GM12878 (cell line): ENCODE measurements at regions of chr12 and their contacts with region 1.

Region 1: DNA sequence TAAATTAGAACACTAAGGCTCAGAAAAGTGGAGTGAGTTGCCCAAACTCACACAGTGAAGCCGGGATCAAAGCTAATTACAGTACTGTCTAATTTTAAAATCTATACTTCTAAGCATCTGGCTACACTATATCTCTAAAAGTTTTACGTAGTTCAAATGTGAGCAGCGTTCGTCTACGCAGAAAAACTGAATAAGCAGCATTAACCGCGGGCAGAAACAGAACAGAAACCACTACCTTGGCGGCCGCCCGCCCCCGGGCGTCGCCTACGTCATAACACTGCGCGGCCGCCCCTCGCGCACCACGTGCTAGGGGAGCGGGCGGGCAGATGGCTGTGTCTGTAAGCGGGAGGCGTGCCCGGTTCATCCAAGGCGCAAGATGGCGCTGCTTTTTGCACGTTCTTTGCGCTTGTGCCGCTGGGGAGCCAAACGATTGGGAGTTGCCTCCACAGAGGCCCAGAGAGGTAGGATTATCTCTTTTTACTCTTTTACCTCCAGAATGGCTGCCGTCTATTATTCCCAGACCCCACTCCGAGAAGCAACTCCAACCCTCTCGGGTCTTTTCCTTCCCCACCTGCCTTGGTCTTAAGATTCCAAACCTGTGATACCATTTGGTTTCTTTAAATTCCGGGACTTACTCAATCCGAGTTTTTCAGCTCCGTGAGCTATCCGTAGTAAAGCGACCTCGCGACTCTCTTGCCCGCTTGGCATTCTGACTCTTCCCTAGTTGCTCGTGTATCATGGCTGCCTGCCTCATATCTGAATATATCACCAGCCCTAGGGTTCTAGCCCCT is at the start of gene SPRYD4:
- DNase-seq: peak; percentile 70
- ATAC-seq: peak; percentile 92
- H3K4me3 ChIP-seq: peak within 1 kb of the TSS; percentile 76
- H3K27ac ChIP-seq: peak within 1 kb of the TSS; percentile 93
- H3K4me1 ChIP-seq: peaks cover 15% of the 10 kb centered on the region
- H3K27me3 ChIP-seq: no peaks in the 10 kb centered on the region
- CTCF ChIP-seq: peak; percentile 22 to 68 (median 27); a peak in 4 of 6 replicates
- EP300 ChIP-seq: no peak
- POLR2A ChIP-seq: peak; percentile 95
- RAD21 ChIP-seq: no peak
- polyA plus RNA-seq, gene SPRYD4: 4.8 to 6.0 TPM

Region 2: GRCh38 chr12:56206457-56207166 is 261.8 kb before region 1 on chr12:
- CTCF ChIA-PET with region 1: interaction called, 52 read pairs
- POLR2A ChIA-PET with region 1: interaction called, 4 read pairs
- RAD21 ChIA-PET with region 1: interaction called, 12 read pairs
- SMC1A ChIA-PET with region 1: interaction called, 23 read pairs
- in situ Hi-C with region 1: no loop called
- intact Hi-C with region 1: loop called (anchors 1 kb)
- DNase-seq: no peak
- ATAC-seq: peak; percentile 95
- H3K4me3 ChIP-seq: no peak overlapping the region
- H3K27ac ChIP-seq: no peak overlapping the region
- H3K4me1 ChIP-seq: no peaks in the 10 kb centered on the region
- H3K27me3 ChIP-seq: no peaks in the 10 kb centered on the region
- CTCF ChIP-seq: peak; percentile 67 to 79 (median 75)
- EP300 ChIP-seq: no peak
- POLR2A ChIP-seq: no peak; the same call in 1 of the 2 replicates
- RAD21 ChIP-seq: peak; percentile 45

Region 3: GRCh38 chr12:56286044-56286830 is 182.2 kb before region 1 on chr12:
- CTCF ChIA-PET with region 1: interaction called, 10 read pairs
- POLR2A ChIA-PET with region 1: no interaction called
- RAD21 ChIA-PET with region 1: interaction called, 7 read pairs
- SMC1A ChIA-PET with region 1: interaction called, 12 read pairs
- in situ Hi-C with region 1: no loop called
- intact Hi-C with region 1: no loop called
- DNase-seq: no peak
- ATAC-seq: no peak
- H3K4me3 ChIP-seq: no peak overlapping the region
- H3K27ac ChIP-seq: no peak overlapping the region
- H3K4me1 ChIP-seq: no peaks in the 10 kb centered on the region
- H3K27me3 ChIP-seq: no peaks in the 10 kb centered on the region
- CTCF ChIP-seq: no peak
- EP300 ChIP-seq: no peak
- POLR2A ChIP-seq: no peak
- RAD21 ChIP-seq: no peak

Region 4: DNA sequence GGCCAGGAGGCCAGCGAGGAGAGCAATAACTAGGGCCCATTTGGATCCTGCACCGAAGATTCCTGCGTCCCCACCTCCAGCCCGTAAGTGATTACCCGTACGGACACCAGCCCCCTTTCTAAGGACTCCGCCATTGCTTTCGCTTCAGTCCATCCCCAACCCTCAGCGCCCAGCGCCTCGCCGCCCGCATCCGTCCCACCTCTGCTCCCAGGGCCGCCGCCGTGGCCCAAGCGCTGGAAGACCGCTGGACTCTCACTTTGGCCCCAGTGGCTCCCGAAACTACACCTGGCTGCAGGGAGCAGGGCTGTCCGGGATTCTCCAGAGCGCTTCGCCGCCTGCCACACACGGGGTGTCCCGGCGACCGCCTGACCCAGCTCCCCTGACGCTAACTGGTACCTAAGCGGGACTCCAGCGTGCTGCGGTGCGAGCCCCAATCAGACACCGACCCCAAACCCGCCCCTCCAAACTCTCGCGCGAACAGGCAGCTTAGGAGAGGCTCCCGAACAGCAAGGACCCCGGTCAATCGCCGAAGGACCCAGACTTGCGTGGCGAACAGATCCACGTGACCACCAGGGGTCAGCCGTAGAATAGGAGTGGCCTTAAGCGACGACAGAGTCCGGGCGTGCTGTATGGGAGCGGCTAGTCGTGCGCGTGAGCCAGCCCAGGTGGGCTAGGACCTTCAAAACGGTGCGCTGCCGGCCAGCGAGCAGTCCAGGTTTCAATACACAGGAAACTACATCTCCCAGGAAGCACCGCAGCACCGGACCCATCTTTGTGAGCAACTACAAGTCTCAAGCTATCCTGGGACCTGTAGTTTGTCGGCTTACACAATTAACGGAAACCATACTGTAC is 152.6 kb before region 1 on chr12 and contains the start of gene CNPY2:
- CTCF ChIA-PET with region 1: interaction called, 76 read pairs
- POLR2A ChIA-PET with region 1: interaction called, 6 read pairs
- RAD21 ChIA-PET with region 1: interaction called, 71 read pairs
- SMC1A ChIA-PET with region 1: interaction called, 21 read pairs
- in situ Hi-C with region 1: no loop called
- intact Hi-C with region 1: loop called (anchors 1 kb)
- DNase-seq: peak; percentile 97
- ATAC-seq: peak; percentile 95
- H3K4me3 ChIP-seq: peak within 1 kb of the TSS; percentile 97
- H3K27ac ChIP-seq: peak within 1 kb of the TSS; percentile 92
- H3K4me1 ChIP-seq: peaks cover 3% of the 10 kb centered on the region
- H3K27me3 ChIP-seq: no peaks in the 10 kb centered on the region
- CTCF ChIP-seq: peak in 1 of 3 experiments; percentile 50; a peak in 2 of 6 replicates
- EP300 ChIP-seq: no peak
- POLR2A ChIP-seq: peak; percentile 97
- RAD21 ChIP-seq: peak; percentile 55
- polyA plus RNA-seq, gene CNPY2: 25.0 to 50.3 TPM

Region 5: DNA sequence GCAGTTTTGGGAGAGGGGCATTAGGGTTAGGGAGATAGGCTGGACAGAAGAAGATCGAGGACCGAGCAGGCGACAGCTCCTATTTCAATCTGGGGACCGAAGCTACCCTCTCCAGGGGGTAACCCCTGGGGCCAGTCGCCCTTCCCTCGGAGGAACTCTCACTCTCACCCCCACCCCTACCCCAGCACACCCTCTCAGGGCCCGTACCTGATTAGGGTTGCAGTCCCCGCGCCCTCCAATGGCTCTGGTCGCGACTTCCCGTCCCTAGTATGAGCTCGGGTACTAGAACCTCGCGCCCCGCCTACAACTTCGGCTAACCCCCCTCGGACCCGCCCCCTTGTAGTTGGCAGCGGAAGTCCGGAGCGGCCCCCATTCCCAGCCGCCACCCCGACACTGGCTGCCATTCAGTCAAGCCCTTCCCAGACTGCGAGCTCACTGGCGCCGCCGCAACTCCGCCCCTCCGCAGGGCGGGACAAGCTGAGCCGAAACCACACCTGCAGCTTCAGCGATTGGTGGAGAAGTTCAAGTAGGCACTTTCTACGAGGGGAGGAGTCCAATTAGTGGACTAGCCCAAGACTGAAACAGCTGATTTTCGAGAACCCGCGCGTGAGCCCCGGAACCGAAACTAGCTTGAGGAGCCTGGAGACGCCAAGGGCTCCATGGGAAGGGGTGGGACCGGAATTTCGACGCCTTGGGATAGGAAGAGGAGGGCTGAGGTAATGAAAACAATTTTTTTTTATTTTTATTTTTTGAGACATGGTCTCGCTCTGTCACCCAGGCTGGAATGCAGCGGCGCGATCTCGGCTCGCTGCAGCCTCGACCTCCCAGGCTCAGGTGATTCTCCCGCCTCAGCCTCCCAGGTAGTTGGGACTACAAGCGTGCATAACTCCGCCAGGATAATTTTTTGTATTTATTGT is 108.3 kb before region 1 on chr12 and contains the start of gene STAT2:
- CTCF ChIA-PET with region 1: interaction called, 31 read pairs
- POLR2A ChIA-PET with region 1: interaction called, 6 read pairs
- RAD21 ChIA-PET with region 1: interaction called, 41 read pairs
- SMC1A ChIA-PET with region 1: interaction called, 42 read pairs
- in situ Hi-C with region 1: no loop called
- intact Hi-C with region 1: no loop called
- DNase-seq: peak; percentile 99
- ATAC-seq: peak; percentile 98
- H3K4me3 ChIP-seq: peak within 1 kb of the TSS; percentile 93
- H3K27ac ChIP-seq: peak within 1 kb of the TSS; percentile 89
- H3K4me1 ChIP-seq: peaks cover 5% of the 10 kb centered on the region; the same call in 1 of the 2 replicates
- H3K27me3 ChIP-seq: no peaks in the 10 kb centered on the region
- CTCF ChIP-seq: no peak
- EP300 ChIP-seq: no peak
- POLR2A ChIP-seq: peak; percentile 90
- RAD21 ChIP-seq: no peak
- polyA plus RNA-seq, gene STAT2: 16.9 to 23.5 TPM

Region 6: GRCh38 chr12:56529290-56530055 is 61.1 kb after region 1 on chr12:
- CTCF ChIA-PET with region 1: no interaction called
- POLR2A ChIA-PET with region 1: no interaction called
- RAD21 ChIA-PET with region 1: no interaction called
- SMC1A ChIA-PET with region 1: no interaction called
- in situ Hi-C with region 1: no loop called
- intact Hi-C with region 1: no loop called
- DNase-seq: no peak
- ATAC-seq: no peak
- H3K4me3 ChIP-seq: no peak overlapping the region
- H3K27ac ChIP-seq: no peak overlapping the region
- H3K4me1 ChIP-seq: no peaks in the 10 kb centered on the region
- H3K27me3 ChIP-seq: no peaks in the 10 kb centered on the region
- CTCF ChIP-seq: no peak
- EP300 ChIP-seq: no peak
- POLR2A ChIP-seq: no peak
- RAD21 ChIP-seq: no peak